ENCODE measurements at regions of chrX and their contacts with region 1.

Region 1: DNA sequence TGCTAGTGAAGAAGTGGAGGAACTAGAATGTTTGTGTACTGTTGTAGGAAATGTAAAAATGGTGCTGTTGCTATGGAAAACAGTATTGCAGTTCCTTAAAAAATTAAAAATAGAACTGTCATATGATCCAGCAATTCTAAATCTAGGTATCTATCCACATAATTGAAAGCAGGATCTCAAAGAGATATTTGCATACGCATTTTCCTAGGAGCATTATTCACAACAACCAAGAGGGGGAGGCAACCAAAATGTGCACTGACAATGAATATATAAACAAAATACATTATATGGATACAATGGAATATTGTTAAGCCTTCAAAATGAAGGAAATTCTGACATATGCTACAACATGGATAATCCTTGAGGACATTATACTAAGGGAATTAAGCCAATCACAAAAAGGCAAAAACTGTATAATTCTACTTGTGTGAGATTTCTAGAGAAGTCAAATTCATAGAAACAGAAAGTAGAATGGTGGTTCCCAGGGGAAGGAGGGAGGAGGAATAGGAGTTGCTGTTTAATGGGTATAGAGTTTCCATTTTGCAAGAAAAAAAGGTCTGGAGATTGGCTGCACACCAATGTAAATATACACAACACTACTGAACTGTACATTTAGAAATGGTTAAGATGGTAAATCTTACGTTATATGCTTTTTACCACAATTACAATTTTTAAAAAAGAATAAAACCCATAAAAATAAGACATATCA is 35.6 kb upstream of the KCNE5 start:
- DNase-seq: no peak
- H3K4me3 ChIP-seq: no peak overlapping the region
- H3K27me3 ChIP-seq: no peaks in the 10 kb centered on the region
- CTCF ChIP-seq: no peak

Region 2: DNA sequence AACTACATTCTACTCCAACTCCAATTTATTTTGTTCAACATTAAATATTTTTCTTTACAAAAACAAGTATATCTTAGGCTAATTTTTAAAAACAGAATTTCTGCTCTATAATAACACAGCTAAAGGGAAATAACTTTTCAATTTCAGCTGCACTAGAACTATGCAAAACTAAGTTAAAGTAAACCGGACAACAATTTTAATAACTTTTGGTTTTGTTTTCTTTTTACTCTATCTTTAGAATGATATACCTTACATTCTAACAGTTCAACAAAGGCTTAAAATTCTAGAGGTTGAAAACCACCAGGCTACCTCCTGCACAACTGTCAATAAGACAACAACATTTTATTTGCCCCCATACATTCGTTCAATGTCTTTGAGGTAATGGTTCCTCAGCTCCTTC is 16.9 kb before region 1 on chrX:
- CTCF ChIA-PET with region 1: no interaction called
- POLR2A ChIA-PET with region 1: interaction called, 19 read pairs
- DNase-seq: no peak
- H3K4me3 ChIP-seq: no peak overlapping the region
- H3K27me3 ChIP-seq: no peaks in the 10 kb centered on the region
- CTCF ChIP-seq: no peak

Region 3: GRCh38 chrX:110226931-110227330 is 566.3 kb after region 1 on chrX:
- CTCF ChIA-PET with region 1: no interaction called
- POLR2A ChIA-PET with region 1: no interaction called
- DNase-seq: no peak
- H3K4me3 ChIP-seq: no peak overlapping the region
- H3K27me3 ChIP-seq: no peaks in the 10 kb centered on the region
- CTCF ChIP-seq: no peak

Measured in BJ (cell line).